CD8-positive, alpha-beta T cell (primary cell): ENCODE measurements at regions of chr22 and their contacts with region 1.

Region 1: GRCh38 chr22:36470162-36470993 is 11.1 kb downstream of the TXN2 start:
- DNase-seq: peak; percentile 71 to 91 (median 82)
- ATAC-seq: peak; percentile 98
- H3K4me3 ChIP-seq: no peak overlapping the region
- H3K4me3 Mint-ChIP-seq: no peak overlapping the region
- H3K27ac ChIP-seq: no peak overlapping the region
- H3K27ac Mint-ChIP-seq: peak overlapping the region; percentile 75
- H3K4me1 ChIP-seq: peaks cover 14% of the 10 kb centered on the region
- H3K4me1 Mint-ChIP-seq: peaks cover 18% of the 10 kb centered on the region
- H3K27me3 ChIP-seq: no peaks in the 10 kb centered on the region
- H3K27me3 Mint-ChIP-seq: no peaks in the 10 kb centered on the region
- CTCF ChIP-seq: peak; percentile 88

Region 2: DNA sequence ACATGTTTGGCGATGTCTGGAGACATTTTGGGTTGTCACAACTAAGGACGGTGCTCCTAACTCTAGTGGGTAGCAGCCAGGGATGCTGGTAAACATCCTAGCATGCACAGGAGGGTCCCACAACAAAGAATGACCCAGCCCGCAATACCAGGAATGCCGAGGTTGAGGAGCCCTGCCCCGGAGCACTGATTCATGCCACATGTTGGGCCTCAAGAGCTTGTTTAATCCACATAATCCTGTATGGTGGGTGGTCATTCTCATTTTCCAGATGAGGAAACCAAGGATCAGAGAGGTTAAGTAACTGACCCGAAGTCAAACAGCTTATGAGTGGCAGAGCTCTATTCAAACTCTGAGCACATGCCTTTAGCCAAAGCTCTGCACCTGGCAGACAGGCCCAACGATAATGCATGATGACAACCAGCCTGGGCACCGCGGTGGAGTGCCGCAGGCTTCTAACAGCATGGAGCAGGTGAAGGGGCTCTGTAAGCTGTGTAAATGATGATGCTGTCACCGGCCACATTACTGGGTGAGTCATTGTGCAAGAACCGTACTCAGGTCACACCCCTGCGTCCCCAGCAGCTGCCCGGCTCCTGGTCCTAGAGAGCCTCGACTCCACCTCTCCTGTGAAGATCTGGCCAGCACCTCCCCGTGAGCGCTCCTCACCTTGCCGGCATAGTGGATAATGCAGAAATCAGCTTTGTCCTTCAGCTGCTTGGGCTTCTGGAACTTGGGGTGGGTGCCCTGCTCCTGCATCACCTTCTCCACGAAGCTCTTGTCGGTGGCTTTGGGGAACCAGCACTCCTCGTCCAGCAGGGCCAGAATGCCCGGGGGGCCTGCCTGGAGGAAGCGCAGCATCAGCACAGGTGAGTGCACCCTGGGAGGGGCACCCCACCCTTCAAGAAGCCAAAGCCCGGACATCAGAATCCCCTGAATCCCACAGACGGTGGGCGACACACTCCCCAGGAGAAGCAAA is 158.7 kb before region 1 on chr22:
- CTCF ChIA-PET with region 1: interaction called, 29 read pairs
- POLR2A ChIA-PET with region 1: no interaction called
- intact Hi-C with region 1: no loop called
- DNase-seq: no peak
- ATAC-seq: no peak
- H3K4me3 ChIP-seq: no peak overlapping the region
- H3K4me3 Mint-ChIP-seq: no peak overlapping the region
- H3K27ac ChIP-seq: no peak overlapping the region
- H3K27ac Mint-ChIP-seq: no peak overlapping the region
- H3K4me1 ChIP-seq: no peaks in the 10 kb centered on the region
- H3K4me1 Mint-ChIP-seq: peaks cover 3% of the 10 kb centered on the region
- H3K27me3 ChIP-seq: no peaks in the 10 kb centered on the region
- H3K27me3 Mint-ChIP-seq: no peaks in the 10 kb centered on the region
- CTCF ChIP-seq: no peak

Region 3: DNA sequence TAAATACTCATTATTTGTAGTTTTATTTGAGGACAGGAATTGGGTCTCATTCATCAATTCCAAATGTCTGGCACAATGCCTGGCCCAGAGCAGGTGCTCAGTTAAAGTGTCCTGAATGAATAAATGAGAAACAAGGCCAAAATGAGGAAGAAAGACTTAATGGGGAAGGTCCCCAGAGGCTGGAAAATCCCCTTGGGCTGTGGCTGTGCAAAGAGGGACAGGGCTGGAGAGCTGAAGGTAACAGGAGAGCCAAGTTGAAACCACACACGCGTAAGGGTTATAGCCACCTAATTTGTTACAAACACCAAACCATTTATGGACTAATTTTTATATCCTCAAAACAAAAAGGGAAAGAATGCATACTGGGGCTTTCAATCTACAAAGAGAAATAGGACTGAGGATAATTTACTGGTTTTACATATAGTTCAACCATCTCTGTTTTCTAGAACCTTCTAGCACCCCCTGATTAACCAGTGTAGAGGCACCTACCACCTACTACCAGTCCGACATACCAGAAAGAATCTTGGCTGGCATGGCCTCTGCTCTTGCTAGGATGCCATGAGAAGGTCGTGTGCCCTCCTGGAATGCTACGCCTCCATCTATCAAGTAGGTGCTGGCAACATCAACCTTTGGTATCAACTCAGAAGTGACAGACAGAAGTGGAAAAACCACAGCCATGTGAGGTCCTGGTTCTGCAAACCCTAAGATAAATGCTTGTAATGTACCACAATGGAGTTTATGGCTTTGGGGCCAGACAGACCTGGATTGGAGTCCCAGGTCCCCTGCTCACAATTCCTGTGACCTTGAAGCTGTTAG is 111.0 kb before region 1 on chr22:
- CTCF ChIA-PET with region 1: interaction called, 9 read pairs
- POLR2A ChIA-PET with region 1: interaction called, 4 read pairs
- intact Hi-C with region 1: loop called (anchors 1 to 5 kb)
- DNase-seq: peak in 2 of 9 experiments; percentile 62 to 75
- ATAC-seq: no peak
- H3K4me3 ChIP-seq: no peak overlapping the region
- H3K4me3 Mint-ChIP-seq: peak overlapping the region; percentile 67
- H3K27ac ChIP-seq: peak overlapping the region in 1 of 2 experiments; percentile 77
- H3K27ac Mint-ChIP-seq: peak overlapping the region; percentile 92
- H3K4me1 ChIP-seq: peaks cover 97% of the 10 kb centered on the region
- H3K4me1 Mint-ChIP-seq: peaks cover 95% of the 10 kb centered on the region
- H3K27me3 ChIP-seq: no peaks in the 10 kb centered on the region
- H3K27me3 Mint-ChIP-seq: no peaks in the 10 kb centered on the region
- CTCF ChIP-seq: no peak

Region 4: DNA sequence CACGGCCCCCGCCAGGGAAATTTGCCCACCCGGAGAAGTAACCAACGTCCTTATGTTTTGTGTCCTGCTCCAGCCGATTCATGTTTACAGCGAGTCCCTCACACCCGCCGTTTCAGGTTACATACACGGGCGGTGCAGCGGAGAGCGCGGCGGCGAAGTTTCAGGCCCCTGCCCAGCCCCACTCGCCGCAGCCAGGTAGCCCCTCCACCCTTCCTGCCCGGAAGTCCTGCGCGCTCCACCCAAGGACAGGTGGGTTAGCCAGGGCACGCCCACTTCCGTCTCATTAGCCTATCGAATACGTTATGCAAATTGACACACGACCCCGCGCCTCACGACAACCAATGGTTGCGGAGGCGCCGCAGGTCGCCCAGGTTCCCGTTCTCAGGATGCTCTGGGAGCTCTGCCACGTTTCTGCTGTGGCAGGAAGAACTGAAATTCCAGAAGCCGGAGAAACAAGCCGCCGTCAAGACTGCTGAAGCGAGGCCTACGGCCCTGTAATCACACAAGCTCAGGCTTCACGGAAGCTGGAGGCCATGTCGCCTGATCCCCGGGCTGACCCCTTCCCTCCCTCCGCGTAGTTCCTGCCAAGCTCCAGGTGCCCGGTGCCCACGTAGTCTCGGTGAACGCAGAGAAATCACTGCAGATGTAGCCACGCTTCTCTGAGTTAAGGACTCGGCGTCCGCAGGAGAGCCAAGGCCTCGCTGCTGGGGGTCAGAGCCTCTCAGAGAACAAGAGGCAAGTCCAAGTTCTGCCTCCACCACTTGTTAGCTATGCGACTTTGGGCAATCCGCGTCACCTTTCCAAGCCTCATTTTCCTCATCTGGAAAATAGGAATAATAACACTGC is 60.2 kb before region 1 on chr22:
- CTCF ChIA-PET with region 1: interaction called, 30 read pairs
- POLR2A ChIA-PET with region 1: interaction called, 9 read pairs
- intact Hi-C with region 1: loop called (anchors 1 to 2 kb)
- DNase-seq: peak; percentile 18 to 85 (median 75)
- ATAC-seq: peak; percentile 70
- H3K4me3 ChIP-seq: peak overlapping the region; percentile 28 to 58
- H3K4me3 Mint-ChIP-seq: peak overlapping the region; percentile 72
- H3K27ac ChIP-seq: peak overlapping the region; percentile 40 to 53
- H3K27ac Mint-ChIP-seq: peak overlapping the region; percentile 93
- H3K4me1 ChIP-seq: peaks cover 57% of the 10 kb centered on the region
- H3K4me1 Mint-ChIP-seq: peaks cover 51% of the 10 kb centered on the region
- H3K27me3 ChIP-seq: no peaks in the 10 kb centered on the region
- H3K27me3 Mint-ChIP-seq: no peaks in the 10 kb centered on the region
- CTCF ChIP-seq: no peak

Region 5: GRCh38 chr22:36449596-36450175 is 20.7 kb before region 1 on chr22:
- CTCF ChIA-PET with region 1: interaction called, 3 read pairs
- POLR2A ChIA-PET with region 1: no interaction called
- intact Hi-C with region 1: loop called in 1 of 2 experiments (anchors 2 kb)
- DNase-seq: no peak
- ATAC-seq: no peak
- H3K4me3 ChIP-seq: no peak overlapping the region
- H3K4me3 Mint-ChIP-seq: no peak overlapping the region
- H3K27ac ChIP-seq: peak overlapping the region in 1 of 2 experiments; percentile 2
- H3K27ac Mint-ChIP-seq: peak overlapping the region; percentile 55
- H3K4me1 ChIP-seq: peaks cover 58% of the 10 kb centered on the region
- H3K4me1 Mint-ChIP-seq: peaks cover 47% of the 10 kb centered on the region
- H3K27me3 ChIP-seq: no peaks in the 10 kb centered on the region
- H3K27me3 Mint-ChIP-seq: no peaks in the 10 kb centered on the region
- CTCF ChIP-seq: no peak

Region 6: GRCh38 chr22:36486619-36487384 is 16.4 kb after region 1 on chr22:
- CTCF ChIA-PET with region 1: interaction called, 14 read pairs
- POLR2A ChIA-PET with region 1: interaction called, 3 read pairs
- intact Hi-C with region 1: loop called in 1 of 2 experiments (anchors 1 kb)
- DNase-seq: peak; percentile 31 to 84 (median 71)
- ATAC-seq: no peak
- H3K4me3 ChIP-seq: no peak overlapping the region
- H3K4me3 Mint-ChIP-seq: no peak overlapping the region
- H3K27ac ChIP-seq: no peak overlapping the region
- H3K27ac Mint-ChIP-seq: no peak overlapping the region
- H3K4me1 ChIP-seq: peaks cover 3% of the 10 kb centered on the region
- H3K4me1 Mint-ChIP-seq: peaks cover 5% of the 10 kb centered on the region
- H3K27me3 ChIP-seq: no peaks in the 10 kb centered on the region
- H3K27me3 Mint-ChIP-seq: no peaks in the 10 kb centered on the region
- CTCF ChIP-seq: peak; percentile 62

Region 7: GRCh38 chr22:36636916-36637315 is 166.5 kb after region 1 on chr22:
- CTCF ChIA-PET with region 1: no interaction called
- POLR2A ChIA-PET with region 1: no interaction called
- intact Hi-C with region 1: no loop called
- DNase-seq: no peak
- ATAC-seq: no peak
- H3K4me3 ChIP-seq: no peak overlapping the region
- H3K4me3 Mint-ChIP-seq: no peak overlapping the region
- H3K27ac ChIP-seq: no peak overlapping the region
- H3K27ac Mint-ChIP-seq: no peak overlapping the region
- H3K4me1 ChIP-seq: no peaks in the 10 kb centered on the region
- H3K4me1 Mint-ChIP-seq: no peaks in the 10 kb centered on the region
- H3K27me3 ChIP-seq: peaks cover 3 to 5% of the 10 kb centered on the region in 2 experiments
- H3K27me3 Mint-ChIP-seq: peaks cover 69% of the 10 kb centered on the region
- CTCF ChIP-seq: no peak